Left lung (tissue), 14 donors: ENCODE measurements at regions of chr11 and their contacts with region 1.

Region 1: GRCh38 chr11:70467201-70468085 is 69.1 kb downstream of the CTTN start:
- DNase-seq: peak in 3 of 4 donors; percentile 35 to 80 (median 52)
- ATAC-seq: peak; percentile 85
- H3K4me3 ChIP-seq: no peak overlapping the region
- H3K27ac ChIP-seq: no peak overlapping the region
- H3K4me1 ChIP-seq: no peaks in the 10 kb centered on the region
- H3K27me3 ChIP-seq: peaks cover 0 to 23% of the 10 kb centered on the region in 2 donors
- CTCF ChIP-seq: peak; percentile 71 to 82

Region 2: GRCh38 chr11:70191495-70192140 is 275.8 kb before region 1 on chr11:
- intact Hi-C with region 1: no loop called
- DNase-seq: peak; percentile 49 to 93 (median 72)
- ATAC-seq: peak; percentile 96
- H3K4me3 ChIP-seq: no peak overlapping the region
- H3K27ac ChIP-seq: no peak overlapping the region
- H3K4me1 ChIP-seq: no peaks in the 10 kb centered on the region
- H3K27me3 ChIP-seq: peaks cover 0 to 29% of the 10 kb centered on the region in 2 donors
- CTCF ChIP-seq: peak; percentile 83 to 85

Region 3: DNA sequence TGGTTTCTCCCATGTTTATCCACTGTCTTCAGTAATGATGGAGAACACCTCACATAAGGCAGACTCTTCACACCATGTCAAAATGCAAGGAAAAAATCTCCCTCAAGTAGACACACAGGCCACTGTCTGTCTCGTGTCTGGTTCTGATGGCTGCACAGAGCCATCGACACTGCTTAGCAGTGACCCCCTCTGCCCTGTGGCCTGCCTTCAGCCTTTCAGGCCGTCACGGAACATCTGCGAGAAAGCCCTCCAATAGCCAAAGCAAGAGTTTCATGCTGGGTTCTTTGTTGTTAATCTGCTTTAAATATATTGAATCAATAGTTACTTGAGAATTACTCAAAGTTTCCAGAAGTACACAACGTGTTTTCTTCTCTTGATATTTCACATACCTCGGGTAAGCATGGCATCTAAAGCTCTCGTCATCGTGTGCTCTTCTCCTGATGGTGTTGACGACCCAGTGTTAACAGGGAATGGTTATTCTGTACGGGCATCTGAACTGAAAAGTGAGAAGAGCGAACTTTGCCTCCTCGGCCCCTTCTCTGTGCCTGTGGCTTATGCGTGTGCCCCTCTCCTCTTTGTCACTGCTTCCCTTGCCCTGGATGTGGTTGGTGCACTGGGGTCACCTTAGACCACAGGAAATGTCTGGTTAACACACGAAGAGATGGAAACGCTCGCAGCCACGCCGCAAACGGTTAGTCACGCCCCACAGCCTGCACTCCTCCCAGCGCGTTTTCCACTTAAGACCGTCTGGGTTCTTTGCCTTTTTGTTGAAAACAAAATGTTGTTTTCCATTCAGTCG is 102.5 kb before region 1 on chr11:
- intact Hi-C with region 1: no loop called
- DNase-seq: no peak
- ATAC-seq: no peak
- H3K4me3 ChIP-seq: no peak overlapping the region
- H3K27ac ChIP-seq: no peak overlapping the region
- H3K4me1 ChIP-seq: no peaks in the 10 kb centered on the region
- H3K27me3 ChIP-seq: no peaks in the 10 kb centered on the region
- CTCF ChIP-seq: no peak

Region 4: GRCh38 chr11:70755410-70756161 is 288.1 kb after region 1 on chr11:
- intact Hi-C with region 1: loop called in 1 of 2 experiments (anchors 5 kb)
- DNase-seq: peak; percentile 54 to 92 (median 74)
- ATAC-seq: peak; percentile 99
- H3K4me3 ChIP-seq: no peak overlapping the region
- H3K27ac ChIP-seq: no peak overlapping the region
- H3K4me1 ChIP-seq: no peaks in the 10 kb centered on the region
- H3K27me3 ChIP-seq: peaks cover 0 to 17% of the 10 kb centered on the region in 2 donors
- CTCF ChIP-seq: peak; percentile 96 to 97